ENCODE measurements at regions of chr9 and their contacts with region 1.

Region 1: DNA sequence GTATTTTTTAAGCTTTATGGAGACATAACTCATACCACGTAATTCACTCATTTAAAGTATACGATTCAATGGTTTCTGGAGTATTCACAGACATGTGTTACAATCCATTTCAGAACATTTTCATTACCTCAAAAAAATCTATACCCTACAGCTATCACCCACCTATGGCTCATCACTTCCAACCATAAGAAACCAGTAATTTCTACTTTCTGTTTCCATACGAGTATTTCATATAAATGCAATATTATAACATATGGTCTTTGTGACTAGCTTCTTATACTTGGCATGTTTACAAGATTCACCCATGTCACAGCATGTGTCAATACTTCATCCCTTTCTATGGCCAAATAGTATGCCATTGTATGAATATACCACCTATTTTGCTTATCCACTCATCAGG is 18.8 kb downstream of the UBQLN1 start:
- DNase-seq: no peak
- ATAC-seq: no peak

Region 2: DNA sequence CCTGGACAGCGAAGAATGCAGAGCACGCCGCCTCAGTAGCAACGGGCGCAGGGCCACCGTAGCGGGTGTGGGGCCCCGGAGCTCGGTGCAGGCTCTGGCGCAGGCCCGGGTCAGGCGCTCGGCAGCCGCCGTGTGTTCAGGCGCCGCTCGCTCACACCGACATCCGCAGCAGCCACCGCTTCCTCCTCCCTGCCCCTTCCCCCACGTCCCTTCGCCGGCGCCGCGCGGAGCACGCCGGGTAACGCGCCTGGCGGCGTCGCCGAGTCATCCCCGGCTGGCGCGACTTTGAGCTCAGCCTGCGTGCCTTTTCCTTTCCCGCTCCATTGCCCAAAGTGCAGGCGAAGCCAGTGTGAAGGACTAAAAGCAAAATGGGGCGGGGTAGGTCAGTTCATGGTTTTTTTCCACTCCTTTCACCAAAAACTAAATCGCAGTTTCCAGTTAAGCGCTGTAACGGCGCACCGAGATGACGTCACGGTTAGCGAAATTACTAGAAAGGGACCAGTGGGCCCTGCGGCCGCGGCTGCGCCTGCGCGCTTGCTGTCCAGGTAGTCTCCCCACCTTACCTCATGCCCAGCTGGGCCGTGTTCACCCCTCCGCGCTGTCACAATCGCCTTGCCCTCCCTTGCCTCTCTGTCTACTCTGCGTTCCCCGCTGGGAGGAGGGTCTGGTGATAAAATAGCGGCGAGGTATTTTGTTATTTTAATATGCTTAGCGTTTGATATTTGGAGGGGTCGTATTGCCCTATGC is 19.0 kb after region 1 on chr9 and contains the start of gene UBQLN1:
- intact Hi-C with region 1: no loop called
- DNase-seq: peak; percentile 97
- ATAC-seq: peak; percentile 97
- total RNA-seq, gene UBQLN1: 88.0 TPM

Region 3: DNA sequence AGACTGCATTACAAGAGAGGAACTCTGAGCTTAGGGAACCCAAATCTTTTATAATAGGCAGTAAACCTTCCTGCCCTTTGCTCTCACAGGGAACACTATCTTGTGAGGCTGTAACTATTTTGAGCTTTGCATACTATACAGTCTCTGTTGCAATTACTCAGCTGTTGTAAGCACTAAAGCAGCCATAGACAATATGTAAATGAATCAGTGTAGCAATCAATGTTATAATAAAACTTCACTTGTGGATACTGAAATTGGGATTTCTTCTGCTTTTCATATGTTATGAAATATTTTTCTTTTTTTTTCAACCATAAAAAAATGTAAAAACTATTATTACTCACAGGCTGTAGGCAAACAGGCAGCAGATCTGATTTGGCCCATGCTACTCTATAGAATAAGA is 35.5 kb after region 1 on chr9:
- intact Hi-C with region 1: loop called (anchors 2 kb)
- DNase-seq: no peak
- ATAC-seq: no peak

Region 4: DNA sequence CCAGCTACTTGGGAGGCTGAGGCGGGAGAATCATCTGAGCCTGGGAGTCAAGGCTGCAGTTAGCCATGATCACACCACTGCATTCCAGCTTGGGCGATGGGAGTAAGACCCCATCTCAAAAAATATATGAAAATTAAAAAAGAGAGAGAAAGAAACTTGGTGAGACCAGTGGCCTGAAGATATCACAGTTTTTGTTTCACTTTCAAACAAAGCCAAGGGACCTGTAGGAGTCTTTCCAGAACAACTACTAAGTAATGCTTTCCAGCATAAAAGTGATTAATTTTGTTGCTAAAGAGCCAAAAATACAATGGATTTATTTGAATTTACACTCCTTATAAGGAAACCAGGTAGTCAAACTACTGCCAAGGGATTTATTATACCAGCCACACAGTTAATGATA is 105.1 kb after region 1 on chr9:
- intact Hi-C with region 1: no loop called
- DNase-seq: no peak
- ATAC-seq: no peak

Measured in sciatic nerve (tissue), 2 donors.